CD8-positive, alpha-beta T cell (primary cell): ENCODE measurements at regions of chr1 and their contacts with region 1.

Region 1: GRCh38 chr1:247669221-247669620 is 10.3 kb downstream of the OR13G1 start:
- DNase-seq: no peak
- ATAC-seq: no peak
- H3K4me3 ChIP-seq: no peak overlapping the region
- H3K4me3 Mint-ChIP-seq: no peak overlapping the region
- H3K27ac ChIP-seq: no peak overlapping the region
- H3K27ac Mint-ChIP-seq: no peak overlapping the region
- H3K4me1 ChIP-seq: no peaks in the 10 kb centered on the region
- H3K4me1 Mint-ChIP-seq: no peaks in the 10 kb centered on the region
- H3K27me3 ChIP-seq: no peaks in the 10 kb centered on the region
- H3K27me3 Mint-ChIP-seq: peaks cover 2% of the 10 kb centered on the region
- CTCF ChIP-seq: no peak

Region 2: GRCh38 chr1:247639381-247639981 is 29.7 kb before region 1 on chr1:
- CTCF ChIA-PET with region 1: no interaction called
- POLR2A ChIA-PET with region 1: no interaction called
- intact Hi-C with region 1: loop called in 1 of 2 experiments (anchors 1 kb)
- DNase-seq: peak in 6 of 9 experiments; percentile 2 to 45 (median 18)
- ATAC-seq: peak; percentile 70
- H3K4me3 ChIP-seq: no peak overlapping the region
- H3K4me3 Mint-ChIP-seq: peak overlapping the region; percentile 33
- H3K27ac ChIP-seq: no peak overlapping the region
- H3K27ac Mint-ChIP-seq: no peak overlapping the region
- H3K4me1 ChIP-seq: no peaks in the 10 kb centered on the region
- H3K4me1 Mint-ChIP-seq: peaks cover 2% of the 10 kb centered on the region
- H3K27me3 ChIP-seq: no peaks in the 10 kb centered on the region
- H3K27me3 Mint-ChIP-seq: peaks cover 30% of the 10 kb centered on the region
- CTCF ChIP-seq: no peak